Ascending aorta (tissue), 2 donors: ENCODE measurements at regions of chr1 and their contacts with region 1.

Region 1: DNA sequence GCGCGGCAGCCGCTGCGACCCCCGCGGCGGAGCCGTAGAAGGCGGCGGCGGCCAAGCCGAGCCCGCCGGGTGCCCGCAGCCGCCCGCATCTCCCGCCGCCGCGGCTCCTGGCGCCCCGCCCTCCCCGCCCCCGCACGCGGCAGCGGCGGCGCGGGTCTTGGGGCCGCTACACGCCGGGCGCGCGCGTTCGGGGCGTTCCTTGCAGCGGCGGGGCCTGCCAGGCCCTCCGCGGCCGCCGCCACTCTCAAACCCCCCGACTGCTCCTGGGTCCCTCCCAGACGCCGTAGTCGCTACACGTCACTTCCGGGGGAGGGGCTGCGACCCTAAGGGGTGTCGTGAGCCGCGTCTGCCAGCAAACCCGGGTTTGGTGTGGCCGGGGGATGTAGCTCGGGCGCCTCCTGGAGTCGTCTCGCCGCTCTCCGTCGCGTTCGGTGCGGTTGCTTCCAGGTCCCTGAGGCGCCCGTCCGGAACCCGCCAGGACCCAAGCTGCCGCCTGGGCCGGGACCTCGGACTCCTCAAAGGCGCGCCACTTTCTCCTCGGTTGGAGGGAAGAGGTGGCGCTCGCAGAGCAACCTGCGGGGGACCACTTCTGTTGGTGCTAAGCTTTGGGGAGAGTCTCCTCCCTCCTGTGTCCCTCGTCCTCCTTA is at the start of gene ELK4:
- DNase-seq: peak; percentile 90 to 99
- H3K4me3 ChIP-seq: peak within 1 kb of the TSS; percentile 79 to 90
- H3K27ac ChIP-seq: peak within 1 kb of the TSS; percentile 97 to 98
- H3K4me1 ChIP-seq: peaks cover 0 to 21% of the 10 kb centered on the region in 2 donors
- H3K27me3 ChIP-seq: no peaks in the 10 kb centered on the region
- CTCF ChIP-seq: peak; percentile 72 to 91 (median 77)
- total RNA-seq, gene ELK4: 23.7 TPM

Region 2: GRCh38 chr1:205543411-205544301 is 88.2 kb before region 1 on chr1:
- intact Hi-C with region 1: loop called (anchors 2 kb)
- DNase-seq: peak; percentile 68 to 92
- H3K4me3 ChIP-seq: peak overlapping the region; percentile 33 to 59
- H3K27ac ChIP-seq: peak overlapping the region; percentile 78 to 85
- H3K4me1 ChIP-seq: peaks cover 0 to 3% of the 10 kb centered on the region in 2 donors
- H3K27me3 ChIP-seq: no peaks in the 10 kb centered on the region
- CTCF ChIP-seq: no peak

Region 3: GRCh38 chr1:205598841-205599668 is 32.8 kb before region 1 on chr1:
- intact Hi-C with region 1: loop called (anchors 2 kb)
- DNase-seq: peak; percentile 24 to 89
- H3K4me3 ChIP-seq: peak overlapping the region in 1 of 2 donors; percentile 20
- H3K27ac ChIP-seq: peak overlapping the region; percentile 69 to 79
- H3K4me1 ChIP-seq: peaks cover 11 to 26% of the 10 kb centered on the region in 2 donors
- H3K27me3 ChIP-seq: no peaks in the 10 kb centered on the region
- CTCF ChIP-seq: no peak

Region 4: GRCh38 chr1:205812878-205813754 is 181.3 kb after region 1 on chr1 and contains the start of gene SLC41A1:
- intact Hi-C with region 1: loop called (anchors 2 kb)
- DNase-seq: peak; percentile 89 to 97
- H3K4me3 ChIP-seq: peak within 1 kb of the TSS; percentile 94
- H3K27ac ChIP-seq: peak within 1 kb of the TSS; percentile 94 to 96
- H3K4me1 ChIP-seq: peaks cover 5 to 32% of the 10 kb centered on the region in 2 donors
- H3K27me3 ChIP-seq: no peaks in the 10 kb centered on the region
- CTCF ChIP-seq: no peak
- total RNA-seq, gene SLC41A1: 28.8 TPM